CD4-positive, alpha-beta memory T cell (primary cell): ENCODE measurements at regions of chr7 and their contacts with region 1.

Region 1: GRCh38 chr7:40221836-40222235 is 87.0 kb downstream of the SUGCT start:
- DNase-seq: no peak
- H3K4me3 ChIP-seq: no peak overlapping the region
- H3K4me3 Mint-ChIP-seq: no peak overlapping the region
- H3K27ac ChIP-seq: no peak overlapping the region
- H3K27ac Mint-ChIP-seq: no peak overlapping the region
- H3K4me1 ChIP-seq: no peaks in the 10 kb centered on the region
- H3K4me1 Mint-ChIP-seq: no peaks in the 10 kb centered on the region
- H3K27me3 ChIP-seq: no peaks in the 10 kb centered on the region
- H3K27me3 Mint-ChIP-seq: peaks cover 0 to 3% of the 10 kb centered on the region in 2 donors

Region 2: DNA sequence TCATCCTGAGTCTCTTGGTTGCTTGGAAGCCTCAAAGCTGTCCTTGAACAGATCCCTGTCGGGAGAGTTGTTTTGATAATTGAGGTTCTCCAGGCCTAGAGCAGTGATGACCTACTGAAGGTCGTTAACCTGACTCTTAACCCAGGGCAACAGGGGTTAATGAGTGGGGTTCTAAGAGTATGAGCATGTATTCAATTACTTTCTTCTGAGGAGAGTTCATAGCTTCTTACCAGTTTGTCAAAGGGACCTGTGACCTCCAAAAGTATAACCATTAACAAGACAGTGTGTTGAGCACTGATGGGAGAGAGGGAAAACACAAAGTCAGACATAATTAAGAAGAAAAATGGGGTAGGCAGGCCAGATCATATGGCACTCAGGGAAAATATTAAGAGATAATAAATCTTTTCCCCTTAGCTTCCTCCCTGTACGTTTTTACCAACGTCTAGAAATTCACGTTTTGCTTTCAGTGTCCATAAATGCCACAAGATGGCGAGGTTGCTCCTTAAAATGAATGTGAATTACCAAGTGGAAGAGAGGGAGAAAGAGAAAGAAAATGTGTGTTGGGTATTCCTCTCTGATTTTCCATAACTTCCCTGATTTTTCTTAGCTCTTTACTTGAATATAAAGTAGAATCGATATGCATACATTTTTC is 10.5 kb after region 1 on chr7:
- CTCF ChIA-PET with region 1: interaction called, 10 read pairs
- POLR2A ChIA-PET with region 1: no interaction called
- intact Hi-C with region 1: no loop called
- DNase-seq: no peak
- H3K4me3 ChIP-seq: no peak overlapping the region
- H3K4me3 Mint-ChIP-seq: no peak overlapping the region
- H3K27ac ChIP-seq: no peak overlapping the region
- H3K27ac Mint-ChIP-seq: no peak overlapping the region
- H3K4me1 ChIP-seq: no peaks in the 10 kb centered on the region
- H3K4me1 Mint-ChIP-seq: peaks cover 0 to 5% (median under 1%) of the 10 kb centered on the region in 4 donors
- H3K27me3 ChIP-seq: no peaks in the 10 kb centered on the region
- H3K27me3 Mint-ChIP-seq: no peaks in the 10 kb centered on the region